B cell (primary cell): ENCODE measurements at regions of chr6 and their contacts with region 1.

Region 1: DNA sequence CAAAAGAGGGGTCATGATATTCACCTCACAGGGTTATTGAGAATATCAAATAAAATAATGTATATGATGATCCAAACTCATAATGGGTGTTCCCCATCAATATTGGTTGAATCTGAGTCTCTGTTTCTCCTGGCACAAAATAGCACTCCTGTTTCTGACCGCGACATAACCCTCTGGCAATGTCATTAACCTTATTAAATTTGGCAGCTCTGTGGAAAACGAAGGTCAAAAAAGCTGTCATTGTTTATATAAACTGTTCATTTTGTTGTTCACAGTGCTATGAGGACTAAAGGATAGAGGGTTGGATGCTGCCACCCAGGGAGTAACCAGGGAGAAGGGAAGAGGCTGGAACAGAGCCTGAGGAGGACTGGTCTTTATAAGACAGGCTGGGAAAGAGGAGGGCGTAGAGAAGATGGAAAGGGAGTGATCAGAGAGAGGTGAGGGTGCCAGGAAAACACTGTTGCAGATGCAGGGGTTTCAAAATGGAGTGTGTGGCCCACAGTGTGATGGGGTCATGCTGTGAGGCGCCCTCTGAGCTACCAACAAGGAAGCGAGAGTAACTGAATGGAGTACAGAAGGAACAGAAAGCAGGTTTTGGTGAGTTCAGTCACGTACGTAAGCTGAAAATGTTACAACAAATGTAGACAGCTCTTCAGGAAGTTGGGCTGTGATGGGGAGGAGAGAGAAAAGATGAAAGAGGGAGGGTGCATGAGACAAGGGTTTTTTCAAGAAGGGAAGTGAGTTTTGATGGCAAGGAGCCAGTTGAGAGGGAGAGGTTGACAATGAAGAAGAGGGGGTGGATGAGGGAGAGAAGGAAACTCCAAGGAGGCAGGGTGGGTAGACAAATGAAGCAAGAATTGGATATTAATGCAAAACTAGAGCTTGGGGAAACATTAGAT is 251.6 kb upstream of the TAB2 start:
- DNase-seq: peak; percentile 88
- ATAC-seq: peak; percentile 96
- H3K4me3 ChIP-seq: no peak overlapping the region
- H3K4me3 Mint-ChIP-seq: peak overlapping the region; percentile 29
- H3K27ac ChIP-seq: peak overlapping the region; percentile 85 to 86
- H3K27ac Mint-ChIP-seq: peak overlapping the region; percentile 87
- H3K4me1 ChIP-seq: peaks cover 21 to 32% of the 10 kb centered on the region in 2 donors
- H3K4me1 Mint-ChIP-seq: peaks cover 35% of the 10 kb centered on the region
- H3K27me3 ChIP-seq: no peaks in the 10 kb centered on the region
- H3K27me3 Mint-ChIP-seq: no peaks in the 10 kb centered on the region
- CTCF ChIP-seq: no peak

Region 2: DNA sequence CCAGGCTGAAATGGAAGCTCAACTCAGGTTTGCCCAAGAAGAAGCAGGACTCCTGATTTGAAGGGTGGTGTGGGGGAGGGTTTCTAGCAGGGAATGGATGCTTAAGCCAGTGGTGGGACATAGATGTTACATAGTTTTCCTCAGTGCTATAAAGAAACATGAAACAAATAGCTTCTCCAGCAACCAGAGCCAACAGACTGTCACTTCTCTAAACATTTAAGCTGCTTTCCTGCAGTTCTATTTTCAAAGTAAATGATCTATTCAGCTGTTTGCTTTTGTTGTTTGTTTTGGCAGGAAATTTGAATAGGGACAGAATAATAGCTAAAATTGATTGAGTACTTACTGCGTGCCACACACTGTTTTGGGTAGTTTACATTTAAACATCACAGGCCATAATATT is 150.1 kb before region 1 on chr6:
- CTCF ChIA-PET with region 1: no interaction called
- POLR2A ChIA-PET with region 1: no interaction called
- intact Hi-C with region 1: no loop called
- DNase-seq: no peak
- ATAC-seq: no peak
- H3K4me3 ChIP-seq: no peak overlapping the region
- H3K4me3 Mint-ChIP-seq: no peak overlapping the region
- H3K27ac ChIP-seq: no peak overlapping the region
- H3K27ac Mint-ChIP-seq: no peak overlapping the region
- H3K4me1 ChIP-seq: no peaks in the 10 kb centered on the region
- H3K4me1 Mint-ChIP-seq: peaks cover 5% of the 10 kb centered on the region
- H3K27me3 ChIP-seq: no peaks in the 10 kb centered on the region
- H3K27me3 Mint-ChIP-seq: no peaks in the 10 kb centered on the region
- CTCF ChIP-seq: no peak

Region 3: GRCh38 chr6:149043476-149044130 is 22.3 kb before region 1 on chr6:
- CTCF ChIA-PET with region 1: interaction called, 19 read pairs
- POLR2A ChIA-PET with region 1: no interaction called
- intact Hi-C with region 1: no loop called
- DNase-seq: no peak
- ATAC-seq: peak; percentile 33
- H3K4me3 ChIP-seq: no peak overlapping the region
- H3K4me3 Mint-ChIP-seq: no peak overlapping the region
- H3K27ac ChIP-seq: no peak overlapping the region
- H3K27ac Mint-ChIP-seq: no peak overlapping the region
- H3K4me1 ChIP-seq: peaks cover 22 to 32% of the 10 kb centered on the region in 2 donors
- H3K4me1 Mint-ChIP-seq: peaks cover 35% of the 10 kb centered on the region
- H3K27me3 ChIP-seq: no peaks in the 10 kb centered on the region
- H3K27me3 Mint-ChIP-seq: no peaks in the 10 kb centered on the region
- CTCF ChIP-seq: peak; percentile 37

Region 4: DNA sequence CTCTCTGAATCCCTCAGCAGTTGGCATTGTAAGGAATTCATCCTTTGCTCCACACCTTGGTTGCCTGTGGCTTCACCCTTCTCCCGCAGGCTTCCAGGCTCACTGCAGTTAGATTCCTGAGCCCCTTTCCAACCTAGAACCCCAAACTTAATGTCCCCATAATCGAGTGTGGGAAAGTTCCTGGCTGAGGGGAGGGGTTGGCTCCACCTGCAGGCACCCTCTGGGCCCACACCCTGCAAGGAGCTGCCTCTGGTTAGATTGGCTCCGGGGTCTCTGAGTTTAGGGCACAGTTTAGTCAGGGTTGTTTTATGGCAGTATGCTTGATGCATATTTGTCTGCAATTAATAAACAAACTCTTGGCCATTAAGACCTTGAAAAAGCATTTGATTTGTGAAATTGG is 1863.0 kb after region 1 on chr6:
- CTCF ChIA-PET with region 1: no interaction called
- POLR2A ChIA-PET with region 1: interaction called, 10 read pairs
- intact Hi-C with region 1: no loop called
- DNase-seq: no peak
- ATAC-seq: no peak
- H3K4me3 ChIP-seq: no peak overlapping the region
- H3K4me3 Mint-ChIP-seq: no peak overlapping the region
- H3K27ac ChIP-seq: no peak overlapping the region
- H3K27ac Mint-ChIP-seq: no peak overlapping the region
- H3K4me1 ChIP-seq: peaks cover 14% of the 10 kb centered on the region in 2 donors
- H3K4me1 Mint-ChIP-seq: peaks cover 25% of the 10 kb centered on the region
- H3K27me3 ChIP-seq: no peaks in the 10 kb centered on the region
- H3K27me3 Mint-ChIP-seq: no peaks in the 10 kb centered on the region
- CTCF ChIP-seq: peak; percentile 14